Caco-2 (cell line): ENCODE measurements at regions of chrX and their contacts with region 1.

Region 1: DNA sequence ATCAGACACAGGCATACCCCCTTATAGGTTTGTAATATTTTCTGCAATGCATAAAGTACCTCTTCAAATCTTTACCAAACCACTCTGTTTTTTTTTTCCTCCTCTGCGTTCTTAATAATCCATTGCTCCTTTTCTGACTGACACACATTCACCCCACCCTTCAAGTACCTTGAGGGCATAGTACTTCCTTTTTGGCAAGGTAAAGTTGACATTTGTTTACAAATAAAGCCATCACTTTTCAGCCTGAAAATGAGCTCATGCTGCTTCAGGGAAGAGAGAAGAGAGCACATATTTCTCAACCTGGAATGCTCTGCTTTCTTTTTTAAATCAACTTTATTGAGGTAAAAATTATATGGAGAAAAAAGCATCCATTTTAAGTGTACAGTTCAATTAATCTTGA is 113.8 kb downstream of the AGTR2 start:
- DNase-seq: no peak
- H3K4me3 ChIP-seq: no peak overlapping the region
- H3K4me3 Mint-ChIP-seq: no peak overlapping the region
- H3K27ac Mint-ChIP-seq: no peak overlapping the region
- H3K4me1 ChIP-seq: peaks cover 14% of the 10 kb centered on the region
- H3K4me1 Mint-ChIP-seq: peaks cover 22% of the 10 kb centered on the region
- H3K27me3 ChIP-seq: no peaks in the 10 kb centered on the region
- H3K27me3 Mint-ChIP-seq: no peaks in the 10 kb centered on the region
- CTCF ChIP-seq: no peak

Region 2: GRCh38 chrX:116230136-116230889 is 54.1 kb before region 1 on chrX:
- CTCF ChIA-PET with region 1: no interaction called
- POLR2A ChIA-PET with region 1: no interaction called
- intact Hi-C with region 1: loop called (anchors 1 kb)
- DNase-seq: peak in 1 of 2 experiments; percentile 42
- H3K4me3 ChIP-seq: no peak overlapping the region
- H3K4me3 Mint-ChIP-seq: peak overlapping the region; percentile 47
- H3K27ac Mint-ChIP-seq: peak overlapping the region; percentile 67
- H3K4me1 ChIP-seq: peaks cover 11% of the 10 kb centered on the region; the same call in 1 of the 2 replicates
- H3K4me1 Mint-ChIP-seq: peaks cover 7% of the 10 kb centered on the region
- H3K27me3 ChIP-seq: no peaks in the 10 kb centered on the region
- H3K27me3 Mint-ChIP-seq: no peaks in the 10 kb centered on the region
- CTCF ChIP-seq: no peak

Region 3: DNA sequence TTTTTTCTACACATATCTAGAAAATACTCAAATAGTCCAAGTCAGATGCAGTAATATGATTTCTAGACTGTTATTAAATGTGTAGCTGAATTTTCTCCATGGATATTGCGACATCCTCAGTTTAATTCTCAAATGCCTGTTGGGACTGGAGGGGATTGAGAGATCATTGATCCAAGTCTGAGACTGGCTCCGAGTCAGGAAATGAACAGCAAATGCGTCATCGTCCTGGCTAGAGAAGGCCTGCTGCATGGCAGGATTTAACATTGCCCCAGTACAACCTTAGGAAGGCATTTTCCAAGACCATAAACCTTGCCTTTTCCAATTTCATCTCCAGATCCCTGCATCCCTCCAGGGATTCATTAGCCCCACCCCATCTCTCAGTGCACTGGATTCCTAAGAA is 95.5 kb after region 1 on chrX:
- CTCF ChIA-PET with region 1: no interaction called
- POLR2A ChIA-PET with region 1: no interaction called
- intact Hi-C with region 1: loop called (anchors 10 kb)
- DNase-seq: no peak
- H3K4me3 ChIP-seq: no peak overlapping the region
- H3K4me3 Mint-ChIP-seq: no peak overlapping the region
- H3K27ac Mint-ChIP-seq: no peak overlapping the region
- H3K4me1 ChIP-seq: no peaks in the 10 kb centered on the region
- H3K4me1 Mint-ChIP-seq: no peaks in the 10 kb centered on the region
- H3K27me3 ChIP-seq: no peaks in the 10 kb centered on the region
- H3K27me3 Mint-ChIP-seq: no peaks in the 10 kb centered on the region
- CTCF ChIP-seq: no peak